B cell (primary cell): ENCODE measurements at regions of chr15 and their contacts with region 1.

Region 1: DNA sequence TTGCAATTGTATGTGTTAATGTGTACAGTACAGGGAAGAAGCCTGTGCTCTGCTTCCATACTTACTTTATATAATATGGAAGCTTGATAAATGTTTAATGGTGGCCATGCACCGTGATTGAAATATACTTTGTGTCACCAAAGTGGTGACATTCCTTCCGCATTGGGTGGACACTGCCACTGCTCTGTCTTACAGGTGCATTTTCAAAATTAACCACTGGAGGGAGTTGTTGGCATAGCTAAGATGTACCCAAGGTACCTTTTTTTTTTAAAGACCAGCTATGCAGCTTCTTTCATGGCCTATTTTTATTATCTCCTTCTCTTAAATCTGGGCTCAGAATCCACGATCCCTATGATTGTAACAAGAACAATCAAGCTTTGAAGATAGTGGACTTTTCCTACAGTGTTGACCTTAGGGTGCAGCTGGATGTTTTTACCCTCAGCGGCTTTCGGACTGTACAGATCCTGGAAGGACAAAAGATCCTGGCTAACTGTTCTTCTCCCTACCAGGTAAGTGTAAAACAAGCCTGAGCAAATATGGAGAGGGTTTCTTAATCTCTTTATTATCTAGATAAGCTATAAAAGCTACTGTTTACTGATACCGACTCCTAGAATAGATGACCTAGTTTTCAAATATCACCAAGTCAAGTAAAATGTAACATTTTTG is 21.6 kb upstream of the PAK6 start:
- DNase-seq: peak; percentile 85
- ATAC-seq: peak; percentile 96
- H3K4me3 ChIP-seq: no peak overlapping the region
- H3K4me3 Mint-ChIP-seq: no peak overlapping the region
- H3K27ac ChIP-seq: no peak overlapping the region
- H3K27ac Mint-ChIP-seq: no peak overlapping the region
- H3K4me1 ChIP-seq: no peaks in the 10 kb centered on the region
- H3K4me1 Mint-ChIP-seq: no peaks in the 10 kb centered on the region
- H3K27me3 ChIP-seq: no peaks in the 10 kb centered on the region
- H3K27me3 Mint-ChIP-seq: no peaks in the 10 kb centered on the region
- CTCF ChIP-seq: peak; percentile 95

Region 2: GRCh38 chr15:39781967-39782302 is 435.4 kb before region 1 on chr15:
- CTCF ChIA-PET with region 1: no interaction called
- POLR2A ChIA-PET with region 1: no interaction called
- intact Hi-C with region 1: no loop called
- DNase-seq: no peak
- ATAC-seq: no peak
- H3K4me3 ChIP-seq: peak overlapping the region; percentile 47 to 91 (median 90)
- H3K4me3 Mint-ChIP-seq: peak overlapping the region; percentile 85
- H3K27ac ChIP-seq: peak overlapping the region; percentile 45 to 83
- H3K27ac Mint-ChIP-seq: peak overlapping the region; percentile 97
- H3K4me1 ChIP-seq: peaks cover 17 to 18% of the 10 kb centered on the region in 2 donors
- H3K4me1 Mint-ChIP-seq: peaks cover 43% of the 10 kb centered on the region
- H3K27me3 ChIP-seq: peaks cover 0 to 5% (median 2%) of the 10 kb centered on the region in 4 experiments
- H3K27me3 Mint-ChIP-seq: peaks cover 11% of the 10 kb centered on the region
- CTCF ChIP-seq: no peak

Region 3: DNA sequence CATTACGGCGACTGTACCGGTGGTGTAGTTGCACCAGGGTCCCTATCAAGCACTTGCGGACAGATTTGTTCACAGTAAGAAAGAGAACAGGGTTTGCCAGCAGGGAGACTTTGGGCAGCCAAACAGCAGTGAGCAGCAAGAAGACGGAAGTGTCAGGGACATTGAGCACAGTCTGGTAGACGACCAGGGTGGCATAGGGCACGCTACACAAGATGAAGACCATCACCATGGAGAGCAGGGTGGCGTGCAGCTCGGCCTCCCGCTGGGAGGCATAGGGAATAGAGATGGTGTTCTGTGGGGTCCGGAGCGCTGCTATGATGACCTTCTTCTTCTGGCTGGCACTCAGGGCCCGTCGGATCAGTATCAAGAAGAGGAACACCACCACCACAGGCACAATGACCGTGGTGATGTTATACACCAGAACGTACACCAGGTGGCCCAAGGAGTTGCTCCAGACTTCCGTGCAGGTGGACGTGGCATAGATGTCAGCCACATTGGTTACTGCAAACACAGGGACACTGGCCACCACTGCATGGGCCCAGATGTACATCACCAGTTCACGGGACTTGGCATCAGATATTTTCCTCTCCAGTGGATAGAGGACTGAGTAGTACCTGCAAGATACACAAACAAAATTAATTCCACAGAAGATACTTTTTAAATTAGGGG is 415.5 kb before region 1 on chr15:
- CTCF ChIA-PET with region 1: no interaction called
- POLR2A ChIA-PET with region 1: no interaction called
- intact Hi-C with region 1: no loop called
- DNase-seq: peak; percentile 31
- ATAC-seq: peak; percentile 31
- H3K4me3 ChIP-seq: no peak overlapping the region
- H3K4me3 Mint-ChIP-seq: no peak overlapping the region
- H3K27ac ChIP-seq: no peak overlapping the region
- H3K27ac Mint-ChIP-seq: no peak overlapping the region
- H3K4me1 ChIP-seq: no peaks in the 10 kb centered on the region
- H3K4me1 Mint-ChIP-seq: no peaks in the 10 kb centered on the region
- H3K27me3 ChIP-seq: peaks cover 0 to 5% (median 0%) of the 10 kb centered on the region in 4 experiments
- H3K27me3 Mint-ChIP-seq: peaks cover 29% of the 10 kb centered on the region
- CTCF ChIP-seq: peak; percentile 54

Region 4: DNA sequence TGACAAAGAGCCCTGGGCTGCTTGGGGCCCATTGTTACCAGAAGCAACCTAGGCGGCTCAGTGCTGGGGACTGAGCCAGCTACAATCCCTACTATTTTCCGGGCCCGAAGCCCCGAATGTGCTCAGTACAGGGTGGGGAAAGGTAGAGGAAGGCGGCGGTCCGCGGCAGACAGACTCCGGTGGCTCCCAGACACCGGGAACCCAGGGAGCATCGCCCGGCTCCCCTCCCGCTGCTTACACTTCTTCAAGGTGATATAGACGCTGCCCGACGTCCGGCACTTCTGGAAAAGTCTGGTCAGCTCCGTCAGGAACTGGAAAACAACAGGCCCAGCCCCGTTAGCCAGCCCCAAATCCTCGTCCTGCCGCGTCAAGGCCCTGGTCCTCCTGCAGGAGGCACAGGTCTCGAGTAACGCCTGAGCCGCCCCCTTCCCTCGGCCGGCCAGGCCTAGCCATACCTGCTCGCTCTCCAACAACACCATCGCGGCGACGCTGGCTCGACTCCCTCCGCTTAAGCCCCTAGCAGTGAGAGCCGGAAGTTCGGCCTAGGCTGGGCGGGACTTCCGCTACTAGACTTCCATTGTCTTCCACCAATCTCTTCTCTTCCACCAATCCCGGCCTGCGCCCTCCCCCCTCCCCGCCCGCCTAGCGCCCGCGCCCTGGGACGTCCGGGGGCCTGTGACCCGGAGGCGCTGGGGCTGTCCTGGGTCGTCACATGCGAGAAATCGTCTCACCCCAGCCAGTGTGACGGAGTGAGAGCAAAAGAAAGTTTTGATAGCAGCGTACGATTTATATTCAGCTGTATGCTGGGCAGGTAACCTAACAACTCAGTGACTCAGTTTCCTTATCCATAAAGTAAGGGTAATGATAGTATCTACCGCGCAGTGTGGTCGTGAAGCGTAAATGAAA is 178.4 kb before region 1 on chr15 and contains the start of gene SRP14:
- CTCF ChIA-PET with region 1: interaction called, 124 read pairs
- POLR2A ChIA-PET with region 1: no interaction called
- intact Hi-C with region 1: no loop called
- DNase-seq: peak; percentile 95
- ATAC-seq: peak; percentile 96
- H3K4me3 ChIP-seq: peak within 1 kb of the TSS; percentile 72 to 99 (median 96)
- H3K4me3 Mint-ChIP-seq: peak within 1 kb of the TSS; percentile 97
- H3K27ac ChIP-seq: peak within 1 kb of the TSS; percentile 93 to 95
- H3K27ac Mint-ChIP-seq: peak within 1 kb of the TSS; percentile 92
- H3K4me1 ChIP-seq: peaks cover 14 to 21% of the 10 kb centered on the region in 2 donors
- H3K4me1 Mint-ChIP-seq: peaks cover 28% of the 10 kb centered on the region
- H3K27me3 ChIP-seq: no peaks in the 10 kb centered on the region
- H3K27me3 Mint-ChIP-seq: no peaks in the 10 kb centered on the region
- CTCF ChIP-seq: peak; percentile 23
- total RNA-seq, gene SRP14: 112 and 120 TPM in 2 replicates

Region 5: DNA sequence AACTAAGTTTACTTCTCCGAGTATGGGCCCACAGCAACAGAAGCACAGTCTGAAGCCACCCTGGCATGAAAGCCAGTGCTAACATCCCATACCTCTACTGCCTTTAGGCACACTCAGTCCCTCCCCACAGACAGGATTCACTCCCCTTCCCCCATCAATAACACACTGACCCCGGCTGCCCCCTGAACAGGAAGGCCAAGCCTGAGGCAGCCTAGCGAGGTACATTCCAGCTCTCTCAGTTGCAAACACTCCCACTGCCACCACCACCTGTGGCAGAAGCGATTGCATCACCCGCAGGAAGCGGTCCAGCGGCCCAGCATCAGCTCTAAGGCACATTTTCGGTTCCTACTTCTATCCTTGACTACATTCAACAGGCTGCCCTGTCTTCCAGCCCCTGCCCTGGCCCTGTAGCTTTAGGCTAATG is 101.6 kb before region 1 on chr15:
- CTCF ChIA-PET with region 1: interaction called, 29 read pairs
- POLR2A ChIA-PET with region 1: no interaction called
- intact Hi-C with region 1: no loop called
- DNase-seq: peak; percentile 88
- ATAC-seq: peak; percentile 92
- H3K4me3 ChIP-seq: no peak overlapping the region
- H3K4me3 Mint-ChIP-seq: peak overlapping the region; percentile 69
- H3K27ac ChIP-seq: peak overlapping the region; percentile 75 to 82
- H3K27ac Mint-ChIP-seq: peak overlapping the region; percentile 99
- H3K4me1 ChIP-seq: peaks cover 22 to 25% of the 10 kb centered on the region in 2 donors
- H3K4me1 Mint-ChIP-seq: peaks cover 31% of the 10 kb centered on the region
- H3K27me3 ChIP-seq: no peaks in the 10 kb centered on the region
- H3K27me3 Mint-ChIP-seq: no peaks in the 10 kb centered on the region
- CTCF ChIP-seq: no peak

Region 6: DNA sequence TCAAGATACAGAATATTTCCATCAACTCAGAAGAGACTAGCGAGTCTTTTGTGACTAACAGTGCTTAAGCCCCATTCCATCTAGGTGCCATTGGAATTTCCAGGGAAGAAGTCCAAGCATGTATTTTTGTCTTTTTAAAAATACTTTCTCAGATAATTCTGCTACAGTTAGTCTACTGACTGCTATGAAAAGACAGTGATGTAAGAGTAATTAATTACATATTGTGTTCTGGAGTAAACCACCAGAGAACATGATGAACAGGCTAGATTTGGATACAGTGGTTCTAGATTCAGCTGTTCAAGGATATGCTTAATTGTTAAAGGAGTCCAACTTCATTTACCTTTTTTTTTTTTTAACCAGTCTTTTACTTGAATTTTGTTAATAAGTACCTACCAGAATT is 13.2 kb before region 1 on chr15:
- CTCF ChIA-PET with region 1: interaction called, 10 read pairs
- POLR2A ChIA-PET with region 1: no interaction called
- intact Hi-C with region 1: no loop called
- DNase-seq: no peak
- ATAC-seq: no peak
- H3K4me3 ChIP-seq: no peak overlapping the region
- H3K4me3 Mint-ChIP-seq: no peak overlapping the region
- H3K27ac ChIP-seq: no peak overlapping the region
- H3K27ac Mint-ChIP-seq: no peak overlapping the region
- H3K4me1 ChIP-seq: no peaks in the 10 kb centered on the region
- H3K4me1 Mint-ChIP-seq: no peaks in the 10 kb centered on the region
- H3K27me3 ChIP-seq: no peaks in the 10 kb centered on the region
- H3K27me3 Mint-ChIP-seq: no peaks in the 10 kb centered on the region
- CTCF ChIP-seq: no peak

Region 7: GRCh38 chr15:40307421-40308211 is 90.3 kb after region 1 on chr15 and contains the start of gene PLCB2:
- CTCF ChIA-PET with region 1: interaction called, 22 read pairs
- POLR2A ChIA-PET with region 1: no interaction called
- intact Hi-C with region 1: no loop called
- DNase-seq: peak; percentile 84
- ATAC-seq: peak; percentile 79
- H3K4me3 ChIP-seq: peak within 1 kb of the TSS; percentile 81 to 98 (median 90)
- H3K4me3 Mint-ChIP-seq: peak within 1 kb of the TSS; percentile 98
- H3K27ac ChIP-seq: peak within 1 kb of the TSS; percentile 77 to 96
- H3K27ac Mint-ChIP-seq: peak within 1 kb of the TSS; percentile 99
- H3K4me1 ChIP-seq: peaks cover 25 to 36% of the 10 kb centered on the region in 2 donors
- H3K4me1 Mint-ChIP-seq: peaks cover 48% of the 10 kb centered on the region
- H3K27me3 ChIP-seq: no peaks in the 10 kb centered on the region
- H3K27me3 Mint-ChIP-seq: no peaks in the 10 kb centered on the region
- CTCF ChIP-seq: peak; percentile 59
- total RNA-seq, gene PLCB2: 155 and 166 TPM in 2 replicates